Sciatic nerve (tissue), 2 donors: ENCODE measurements at regions of chr18 and their contacts with region 1.

Region 1: GRCh38 chr18:4528405-4528804 is 73.3 kb upstream of the DLGAP1 start:
- DNase-seq: no peak
- ATAC-seq: no peak

Region 2: GRCh38 chr18:3186678-3187658 is 1341.4 kb before region 1 on chr18:
- intact Hi-C with region 1: no loop called
- DNase-seq: no peak
- ATAC-seq: no peak

Region 3: GRCh38 chr18:4468511-4468910 is 59.9 kb before region 1 on chr18:
- intact Hi-C with region 1: no loop called
- DNase-seq: no peak
- ATAC-seq: no peak

Region 4: DNA sequence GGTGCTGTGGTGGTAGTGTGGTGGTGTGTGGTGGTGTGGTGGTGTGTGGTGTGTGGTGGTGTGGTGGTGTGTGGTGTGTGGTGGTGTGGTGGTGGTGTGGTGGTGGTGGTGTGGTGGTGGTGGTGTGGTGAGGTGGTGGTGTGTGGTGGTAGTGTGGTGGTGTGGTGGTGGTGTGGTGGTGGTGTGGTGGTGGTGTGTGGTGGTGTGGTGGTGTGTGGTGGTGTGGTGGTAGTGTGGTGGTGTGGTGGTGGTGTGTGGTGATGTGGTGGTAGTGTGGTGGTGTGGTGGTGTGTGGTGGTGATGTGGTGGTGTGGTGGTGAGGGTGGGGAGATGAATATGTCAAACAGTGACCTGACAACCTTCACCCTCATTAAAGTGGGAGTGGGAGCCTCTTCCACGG is 17.7 kb before region 1 on chr18:
- intact Hi-C with region 1: no loop called
- DNase-seq: no peak
- ATAC-seq: peak; percentile 94

Region 5: GRCh38 chr18:4544134-4544533 is 15.7 kb after region 1 on chr18:
- intact Hi-C with region 1: loop called (anchors 1 kb)
- DNase-seq: no peak
- ATAC-seq: no peak

Region 6: DNA sequence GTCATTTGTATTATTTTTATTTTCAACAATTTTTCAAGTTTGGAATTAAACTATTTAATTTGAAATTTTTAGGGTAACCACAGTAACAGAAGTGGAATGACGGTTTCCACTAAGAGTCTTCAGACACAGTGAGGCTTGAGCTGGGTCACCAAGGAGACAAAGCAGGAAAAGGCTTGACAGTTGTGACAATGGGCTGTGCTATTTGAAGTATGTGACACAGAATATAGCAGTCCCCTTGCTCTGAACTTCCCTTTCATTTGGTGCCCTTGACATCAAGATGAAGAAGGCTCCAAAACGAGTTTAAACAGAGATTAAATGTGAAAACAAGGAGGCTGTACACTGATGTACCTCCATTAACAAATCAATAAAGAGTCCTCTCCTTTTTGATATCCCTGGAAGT is 192.1 kb after region 1 on chr18:
- intact Hi-C with region 1: no loop called
- DNase-seq: no peak
- ATAC-seq: no peak